ENCODE measurements at regions of chr13 and their contacts with region 1.

Region 1: DNA sequence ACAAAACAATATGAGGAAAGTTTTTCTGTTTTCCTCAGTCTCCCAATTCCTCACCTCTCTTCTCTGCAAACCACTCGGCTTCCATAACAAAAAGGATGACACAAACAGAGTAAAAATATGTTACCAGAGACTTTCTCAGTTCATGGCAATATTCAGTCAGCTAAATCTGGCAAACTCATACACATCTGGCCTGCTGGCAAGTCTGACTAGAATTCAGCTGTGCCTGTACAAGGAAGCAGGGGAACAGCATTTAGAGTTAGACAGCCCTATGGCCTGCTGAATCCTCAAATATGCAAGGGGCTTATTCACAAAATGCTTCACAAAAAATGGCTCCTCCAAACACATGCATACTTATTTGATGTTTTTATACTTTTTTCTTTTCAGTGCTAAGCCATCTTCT is 227.8 kb downstream of the ENOX1 start:
- DNase-seq: no peak
- H3K4me3 ChIP-seq: no peak overlapping the region
- H3K27ac ChIP-seq: no peak overlapping the region
- H3K4me1 ChIP-seq: no peaks in the 10 kb centered on the region
- H3K27me3 ChIP-seq: no peaks in the 10 kb centered on the region
- CTCF ChIP-seq: no peak

Region 2: DNA sequence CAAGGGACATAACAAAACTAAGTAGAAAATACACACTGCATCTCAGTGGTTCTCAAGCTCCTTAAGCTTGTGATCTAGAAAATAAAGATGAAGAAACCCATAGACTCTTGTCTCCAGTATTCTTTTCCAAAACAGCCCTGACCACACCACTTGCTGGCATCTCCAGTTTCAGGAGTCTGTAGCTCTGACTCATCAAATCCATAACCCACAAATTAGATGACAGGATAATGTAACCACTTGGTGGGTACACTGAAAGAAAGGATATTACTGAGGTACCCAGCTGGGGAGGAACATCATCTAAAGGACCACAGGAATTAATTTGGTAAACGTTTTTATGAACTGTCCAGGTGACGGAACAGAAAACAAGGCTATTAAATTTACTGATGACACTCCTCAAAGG is 1812.7 kb before region 1 on chr13:
- CTCF ChIA-PET with region 1: no interaction called
- POLR2A ChIA-PET with region 1: interaction called, 15 read pairs
- intact Hi-C with region 1: no loop called
- DNase-seq: no peak
- H3K4me3 ChIP-seq: no peak overlapping the region
- H3K27ac ChIP-seq: no peak overlapping the region
- H3K4me1 ChIP-seq: no peaks in the 10 kb centered on the region
- H3K27me3 ChIP-seq: no peaks in the 10 kb centered on the region
- CTCF ChIP-seq: no peak

Region 3: DNA sequence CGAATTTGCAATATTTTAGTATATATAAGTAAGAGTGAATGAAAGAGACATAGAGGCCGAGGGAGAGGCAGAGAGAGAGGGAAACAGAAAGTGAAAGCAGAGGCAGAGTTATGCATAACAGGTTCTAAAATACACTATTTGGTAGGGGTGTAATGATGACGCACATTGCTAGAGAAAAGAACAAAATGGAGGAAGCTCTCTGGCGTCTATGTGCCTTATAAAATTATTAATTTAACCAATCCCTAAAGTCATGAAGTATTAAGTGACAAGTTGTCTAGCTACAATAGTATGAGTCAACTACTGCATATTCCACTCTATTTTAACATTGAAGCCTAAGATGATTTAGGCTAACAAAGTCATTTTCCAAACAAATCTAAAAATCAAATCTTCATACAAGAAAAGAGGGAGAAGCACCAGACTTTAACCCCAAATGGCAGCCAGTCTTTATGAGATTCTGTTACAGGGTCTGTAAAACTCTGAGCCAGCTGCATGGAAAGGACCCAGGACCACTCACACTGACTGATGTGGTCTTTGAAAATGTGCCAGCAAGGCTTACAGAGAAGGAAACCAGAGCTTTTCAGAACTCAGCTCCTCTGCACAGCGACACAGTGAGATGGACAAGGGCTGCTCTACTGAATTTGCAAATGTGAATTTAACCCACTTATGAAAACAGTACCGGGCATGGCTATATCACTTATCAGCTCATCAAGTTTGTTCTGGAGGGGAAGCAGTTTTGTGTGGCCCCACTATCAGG is 715.7 kb after region 1 on chr13:
- CTCF ChIA-PET with region 1: no interaction called
- POLR2A ChIA-PET with region 1: no interaction called
- intact Hi-C with region 1: no loop called
- DNase-seq: peak in 1 of 2 experiments; percentile 48
- H3K4me3 ChIP-seq: peak overlapping the region; percentile 37; the same call in 1 of the 2 replicates
- H3K27ac ChIP-seq: no peak overlapping the region
- H3K4me1 ChIP-seq: peaks cover 25% of the 10 kb centered on the region
- H3K27me3 ChIP-seq: no peaks in the 10 kb centered on the region
- CTCF ChIP-seq: no peak

Measured in PC-9 (cell line).